Endothelial cell of umbilical vein (primary cell): ENCODE measurements at regions of chr1 and their contacts with region 1.

Region 1: GRCh38 chr1:160354388-160354985 is 11.3 kb downstream of the NCSTN start:
- DNase-seq: no peak
- H3K4me3 ChIP-seq: no peak overlapping the region
- H3K27ac ChIP-seq: no peak overlapping the region
- H3K4me1 ChIP-seq: no peaks in the 10 kb centered on the region
- H3K27me3 ChIP-seq: no peaks in the 10 kb centered on the region
- CTCF ChIP-seq: peak; percentile 56 to 62
- POLR2A ChIP-seq: no peak

Region 2: DNA sequence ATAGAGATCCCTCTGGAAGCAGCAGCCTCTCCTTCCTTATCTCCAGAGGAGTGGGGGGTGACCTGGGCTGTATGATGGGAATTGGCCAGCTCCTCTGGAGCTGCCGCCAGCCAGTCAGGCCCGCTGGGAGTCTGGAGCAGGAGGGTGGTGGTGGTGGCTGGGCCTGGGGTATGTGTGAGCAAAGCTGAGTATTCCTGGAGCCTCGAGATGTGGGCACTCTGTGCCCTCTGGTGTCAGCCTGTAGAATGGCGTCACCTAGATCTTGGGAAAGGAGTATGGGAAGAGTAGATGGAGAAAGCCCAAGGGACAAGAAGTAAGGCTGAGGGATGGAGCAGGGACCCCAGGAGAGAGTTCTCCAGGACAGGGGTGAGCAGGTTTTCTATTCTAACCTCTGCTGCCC is 61.9 kb after region 1 on chr1:
- CTCF ChIA-PET with region 1: interaction called, 28 read pairs
- POLR2A ChIA-PET with region 1: no interaction called
- dilution Hi-C with region 1: no loop called
- intact Hi-C with region 1: loop called (anchors 1 kb)
- DNase-seq: peak; percentile 31
- H3K4me3 ChIP-seq: no peak overlapping the region
- H3K27ac ChIP-seq: no peak overlapping the region
- H3K4me1 ChIP-seq: no peaks in the 10 kb centered on the region
- H3K27me3 ChIP-seq: peaks cover 23 to 35% of the 10 kb centered on the region in 2 experiments
- CTCF ChIP-seq: peak; percentile 47 to 56
- POLR2A ChIP-seq: no peak